SK-N-SH (cell line): ENCODE measurements at regions of chr3 and their contacts with region 1.

Region 1: GRCh38 chr3:14672588-14672987 is 2.4 kb upstream of the C3orf20 start:
- DNase-seq: no peak
- H3K4me3 ChIP-seq: no peak overlapping the region
- H3K27ac ChIP-seq: no peak overlapping the region
- H3K4me1 ChIP-seq: peaks cover 0 to 11% of the 10 kb centered on the region in 2 experiments; a peak in 2 of 4 replicates
- H3K27me3 ChIP-seq: no peaks in the 10 kb centered on the region
- CTCF ChIP-seq: no peak
- EP300 ChIP-seq: no peak
- RAD21 ChIP-seq: no peak

Region 2: GRCh38 chr3:14660907-14661306 is 11.7 kb before region 1 on chr3:
- CTCF ChIA-PET with region 1: interaction called, 35 read pairs
- POLR2A ChIA-PET with region 1: no interaction called
- DNase-seq: no peak
- H3K4me3 ChIP-seq: no peak overlapping the region
- H3K27ac ChIP-seq: no peak overlapping the region
- H3K4me1 ChIP-seq: peaks cover 0 to 15% of the 10 kb centered on the region in 2 experiments; a peak in 2 of 4 replicates
- H3K27me3 ChIP-seq: no peaks in the 10 kb centered on the region
- CTCF ChIP-seq: no peak
- EP300 ChIP-seq: no peak
- RAD21 ChIP-seq: no peak

Region 3: DNA sequence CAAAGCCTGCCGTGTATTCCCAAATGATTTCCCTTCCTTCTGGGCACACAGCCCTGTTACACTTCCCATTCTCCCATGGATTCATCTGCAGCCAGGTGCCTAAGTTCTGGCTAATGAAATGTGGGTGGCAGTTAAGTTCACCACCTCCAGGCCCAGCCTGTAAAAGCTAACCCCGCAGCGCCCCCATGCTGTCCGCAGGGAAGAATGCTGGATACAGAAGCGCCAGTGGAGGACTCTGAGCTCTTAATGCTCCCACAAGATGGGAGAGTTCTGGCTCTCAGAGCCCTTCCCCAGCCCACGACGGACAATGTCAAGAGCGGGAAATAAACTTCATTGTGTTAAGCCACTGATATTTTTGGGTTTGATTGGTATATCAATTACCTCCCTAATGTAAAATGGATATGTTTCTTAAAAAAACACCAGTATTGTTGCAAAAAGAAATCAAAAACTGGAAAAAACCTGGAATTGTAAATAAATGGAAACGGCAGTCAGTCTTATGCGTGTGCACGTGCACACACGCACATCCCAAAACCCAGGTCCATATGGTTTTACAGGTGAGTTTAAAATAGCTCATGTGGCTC is 108.4 kb after region 1 on chr3:
- CTCF ChIA-PET with region 1: interaction called, 26 read pairs
- POLR2A ChIA-PET with region 1: no interaction called
- DNase-seq: no peak
- H3K4me3 ChIP-seq: no peak overlapping the region; a peak in 1 of 4 replicates
- H3K27ac ChIP-seq: no peak overlapping the region
- H3K4me1 ChIP-seq: peaks cover 0 to 15% of the 10 kb centered on the region in 2 experiments; a peak in 1 of 4 replicates
- H3K27me3 ChIP-seq: no peaks in the 10 kb centered on the region
- CTCF ChIP-seq: peak; percentile 34; the same call in 1 of the 2 replicates
- EP300 ChIP-seq: no peak
- RAD21 ChIP-seq: peak; percentile 70

Region 4: DNA sequence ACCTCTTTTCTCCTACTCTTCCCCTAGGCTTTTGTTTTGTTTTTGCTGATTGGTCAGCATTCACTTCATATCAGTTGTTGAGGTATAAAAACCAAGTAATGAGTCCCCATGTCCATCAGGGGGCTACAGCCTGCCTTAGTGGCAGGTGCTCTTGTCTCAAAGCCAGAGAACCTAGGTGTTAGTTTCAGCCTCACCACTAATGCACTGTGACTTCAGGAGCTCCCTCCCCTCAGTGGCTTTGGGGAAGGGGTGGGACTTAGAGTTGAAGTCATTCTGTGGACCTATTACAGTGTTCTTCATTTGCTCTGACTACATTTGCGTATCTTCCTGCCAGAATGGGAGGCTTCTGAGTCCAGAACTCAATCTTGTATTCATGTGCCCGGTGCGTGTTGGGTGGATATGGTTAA is 316.4 kb after region 1 on chr3:
- CTCF ChIA-PET with region 1: no interaction called
- POLR2A ChIA-PET with region 1: no interaction called
- DNase-seq: no peak
- H3K4me3 ChIP-seq: no peak overlapping the region
- H3K27ac ChIP-seq: peak overlapping the region in 1 of 2 experiments; percentile 58; a peak in 2 of 4 replicates
- H3K4me1 ChIP-seq: peaks cover 11 to 29% of the 10 kb centered on the region in 2 experiments; a peak in 3 of 4 replicates
- H3K27me3 ChIP-seq: no peaks in the 10 kb centered on the region
- CTCF ChIP-seq: no peak
- EP300 ChIP-seq: no peak
- RAD21 ChIP-seq: no peak